Activated CD8-positive, alpha-beta memory T cell treated with anti-CD3 and anti-CD28 coated beads, Interleukin-2, amount 10 ng/mL, durations not matched to agents 7 days and 5 days (primary cell): ENCODE measurements at regions of chr16 and their contacts with region 1.

Region 1: GRCh38 chr16:31382485-31383161 is 10.5 kb upstream of the ITGAD start:
- DNase-seq: peak; percentile 81
- ATAC-seq: peak; percentile 81
- H3K4me3 Mint-ChIP-seq: no peak overlapping the region
- H3K27ac Mint-ChIP-seq: no peak overlapping the region
- H3K4me1 Mint-ChIP-seq: peaks cover 35% of the 10 kb centered on the region
- H3K27me3 Mint-ChIP-seq: peaks cover 4% of the 10 kb centered on the region

Region 2: GRCh38 chr16:31202414-31203375 is 179.9 kb before region 1 on chr16 and contains the start of gene PYCARD:
- CTCF ChIA-PET with region 1: interaction called, 26 read pairs
- DNase-seq: peak; percentile 64
- ATAC-seq: peak; percentile 43
- H3K4me3 Mint-ChIP-seq: peak within 1 kb of the TSS; percentile 90
- H3K27ac Mint-ChIP-seq: peak within 1 kb of the TSS; percentile 79
- H3K4me1 Mint-ChIP-seq: peaks cover 58% of the 10 kb centered on the region
- H3K27me3 Mint-ChIP-seq: peaks cover 7% of the 10 kb centered on the region
- total RNA-seq, gene PYCARD: 55.4 to 99.1 TPM

Region 3: GRCh38 chr16:31357346-31358109 is 25.1 kb before region 1 on chr16:
- CTCF ChIA-PET with region 1: interaction called, 21 read pairs
- DNase-seq: no peak
- ATAC-seq: no peak
- H3K4me3 Mint-ChIP-seq: peak overlapping the region; percentile 1
- H3K27ac Mint-ChIP-seq: peak overlapping the region; percentile 73
- H3K4me1 Mint-ChIP-seq: peaks cover 48% of the 10 kb centered on the region
- H3K27me3 Mint-ChIP-seq: no peaks in the 10 kb centered on the region

Region 4: GRCh38 chr16:31393056-31393455 is 10.4 kb after region 1 on chr16 and contains the start of gene ITGAD:
- CTCF ChIA-PET with region 1: interaction called, 12 read pairs
- DNase-seq: no peak
- ATAC-seq: no peak
- H3K4me3 Mint-ChIP-seq: no peak within 1 kb of the TSS
- H3K27ac Mint-ChIP-seq: no peak within 1 kb of the TSS
- H3K4me1 Mint-ChIP-seq: peaks cover 9% of the 10 kb centered on the region
- H3K27me3 Mint-ChIP-seq: peaks cover 16% of the 10 kb centered on the region
- total RNA-seq, gene ITGAD: 0.09 to 0.23 TPM

Region 5: DNA sequence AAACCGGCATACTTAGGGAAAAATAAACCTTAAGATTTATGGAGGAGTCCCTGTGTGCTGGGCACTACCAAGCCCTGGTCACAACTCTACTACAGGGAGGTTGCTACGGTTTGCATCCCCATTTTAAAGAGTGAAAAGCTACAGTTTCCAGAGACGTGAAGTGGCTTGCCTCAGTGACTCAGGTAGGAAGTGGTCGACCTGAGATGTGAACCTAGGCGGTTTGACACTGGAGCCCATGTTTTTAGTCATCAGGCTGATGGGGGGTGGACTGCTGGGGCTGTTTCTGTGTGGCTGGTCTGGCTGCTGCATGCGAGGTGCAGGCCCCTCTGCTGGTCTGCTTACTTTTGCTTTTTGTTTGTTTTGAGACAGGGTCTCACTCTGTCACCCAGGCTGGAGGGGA is 39.0 kb after region 1 on chr16:
- CTCF ChIA-PET with region 1: interaction called, 31 read pairs
- DNase-seq: peak; percentile 95
- ATAC-seq: peak; percentile 88
- H3K4me3 Mint-ChIP-seq: peak overlapping the region; percentile 18
- H3K27ac Mint-ChIP-seq: peak overlapping the region; percentile 94
- H3K4me1 Mint-ChIP-seq: peaks cover 73% of the 10 kb centered on the region
- H3K27me3 Mint-ChIP-seq: peaks cover 10% of the 10 kb centered on the region

Region 6: DNA sequence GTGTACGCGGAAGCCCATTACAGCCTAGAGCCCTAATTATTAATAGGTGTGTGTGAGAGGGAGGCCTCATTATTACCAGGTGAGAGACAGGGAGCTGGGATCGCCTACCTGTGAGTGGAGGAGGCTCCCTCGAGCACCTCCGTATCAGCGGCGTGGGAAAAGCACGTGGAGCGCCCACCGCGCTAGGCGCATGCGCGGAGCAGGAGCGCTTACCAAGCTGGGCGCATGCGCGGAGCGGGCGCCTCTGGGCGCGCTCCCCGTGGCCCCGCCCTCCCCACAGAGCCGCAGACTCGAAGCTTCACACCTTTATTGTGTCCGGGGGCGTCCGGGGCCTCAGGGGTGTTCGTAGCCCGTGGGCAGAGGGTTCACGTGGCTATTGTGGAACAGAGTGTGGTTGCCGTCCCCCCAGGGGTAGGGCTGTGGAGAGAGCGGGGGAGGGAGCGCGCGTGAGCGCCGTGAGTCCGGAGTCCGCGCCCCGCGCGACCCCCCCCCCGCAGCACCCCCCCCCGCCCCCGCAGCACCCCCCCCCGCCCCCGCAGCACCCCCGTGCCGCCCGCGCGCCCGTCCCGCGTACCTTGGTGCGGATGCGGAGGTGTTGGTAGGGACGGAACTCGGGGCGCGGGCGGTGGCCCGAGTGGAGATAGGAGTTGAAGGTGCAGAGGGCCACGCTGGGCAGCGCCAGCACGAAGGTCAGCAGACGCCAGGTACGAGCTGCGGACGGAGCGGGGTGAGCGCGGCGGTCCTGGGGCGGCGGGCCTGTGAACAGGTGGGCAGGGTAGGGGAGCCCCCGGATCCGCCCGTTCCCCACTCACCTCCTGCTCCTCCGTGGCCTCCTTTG is 45.0 kb after region 1 on chr16:
- CTCF ChIA-PET with region 1: interaction called, 31 read pairs
- DNase-seq: peak; percentile 66
- ATAC-seq: peak; percentile 51
- H3K4me3 Mint-ChIP-seq: no peak overlapping the region
- H3K27ac Mint-ChIP-seq: no peak overlapping the region
- H3K4me1 Mint-ChIP-seq: peaks cover 57% of the 10 kb centered on the region
- H3K27me3 Mint-ChIP-seq: peaks cover 13% of the 10 kb centered on the region